Naive thymus-derived CD4-positive, alpha-beta T cell (primary cell): ENCODE measurements at regions of chr7 and their contacts with region 1.

Region 1: DNA sequence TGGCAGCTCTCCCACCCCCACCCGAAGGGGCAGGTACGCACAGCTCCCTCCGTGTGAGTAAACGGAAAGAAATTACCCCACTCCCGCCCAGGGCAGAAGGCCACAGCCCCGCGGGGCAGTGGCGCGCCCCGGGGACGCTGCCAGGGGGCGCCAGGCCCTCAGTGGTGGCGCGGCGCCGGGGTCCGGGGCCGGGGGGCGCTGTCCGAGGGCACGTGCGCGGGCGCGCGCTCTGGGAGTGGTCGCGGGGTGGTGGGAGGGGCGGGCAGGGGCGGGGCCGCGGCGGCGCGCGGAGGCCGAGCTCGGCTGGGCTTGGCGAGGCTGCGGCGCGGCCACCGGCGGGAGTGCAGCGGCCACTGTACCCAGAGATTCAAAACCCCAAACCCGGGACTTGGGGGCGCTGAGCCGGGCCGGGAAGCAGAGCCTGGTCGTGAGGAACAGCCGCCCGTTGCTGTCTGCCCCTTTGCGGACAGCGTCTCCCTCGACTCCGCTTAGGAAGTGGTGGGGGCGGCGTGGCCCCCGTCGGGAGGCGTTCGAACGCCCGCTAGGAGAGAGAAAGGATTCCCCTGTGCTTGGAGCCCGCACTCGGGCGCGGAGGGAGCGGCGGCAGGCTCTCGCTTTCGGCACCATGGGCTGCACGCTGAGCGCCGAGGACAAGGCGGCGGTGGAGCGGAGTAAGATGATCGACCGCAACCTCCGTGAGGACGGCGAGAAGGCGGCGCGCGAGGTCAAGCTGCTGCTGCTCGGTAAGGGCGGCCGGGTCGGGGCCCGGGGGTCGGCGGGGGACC is at the start of gene GNAI1:
- DNase-seq: peak in 8 of 9 donors; percentile 12 to 44 (median 28)
- ATAC-seq: peak; percentile 58
- H3K4me3 ChIP-seq: peak within 1 kb of the TSS; percentile 30
- H3K4me3 Mint-ChIP-seq: peak within 1 kb of the TSS; percentile 74 to 94 (median 87)
- H3K27ac ChIP-seq: peak within 1 kb of the TSS; percentile 58
- H3K27ac Mint-ChIP-seq: peak within 1 kb of the TSS in 8 of 9 donors; percentile 34 to 90 (median 83)
- H3K4me1 ChIP-seq: peaks cover 0 to 6% of the 10 kb centered on the region in 2 donors
- H3K4me1 Mint-ChIP-seq: peaks cover 12 to 45% (median 37%) of the 10 kb centered on the region in 7 donors
- H3K27me3 ChIP-seq: no peaks in the 10 kb centered on the region
- H3K27me3 Mint-ChIP-seq: peaks cover 25 to 63% (median 30%) of the 10 kb centered on the region in 5 donors
- total RNA-seq, gene GNAI1: 0.60 to 3.4 (median 2.4) TPM

Region 2: DNA sequence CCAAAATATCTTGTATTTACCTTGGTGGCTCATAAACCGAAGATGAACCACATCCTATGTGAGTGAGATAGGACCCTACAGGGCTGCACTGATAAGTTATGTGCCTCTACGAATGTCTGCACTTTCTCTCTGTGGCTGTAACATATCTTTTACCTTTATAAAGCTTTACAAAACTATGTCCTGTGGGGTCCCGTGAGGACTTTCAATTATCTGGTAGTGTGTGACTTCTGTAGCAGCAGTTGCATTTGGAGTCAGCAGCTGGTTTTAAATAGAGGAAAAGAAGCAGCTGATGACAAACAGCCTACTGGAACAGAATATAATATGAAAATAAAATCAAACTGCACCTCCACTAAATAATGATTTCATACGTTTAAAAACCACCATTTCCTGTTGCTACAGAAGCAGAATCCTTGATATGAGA is 222.5 kb before region 1 on chr7:
- CTCF ChIA-PET with region 1: no interaction called
- POLR2A ChIA-PET with region 1: no interaction called
- intact Hi-C with region 1: loop called in 1 of 2 experiments (anchors 10 kb)
- DNase-seq: peak in 6 of 9 donors; percentile 19 to 42 (median 28)
- ATAC-seq: no peak
- H3K4me3 ChIP-seq: peak overlapping the region; percentile 10
- H3K4me3 Mint-ChIP-seq: peak overlapping the region in 9 of 10 donors; percentile 51 to 77 (median 69)
- H3K27ac ChIP-seq: peak overlapping the region; percentile 38
- H3K27ac Mint-ChIP-seq: peak overlapping the region; percentile 32 to 88 (median 67)
- H3K4me1 ChIP-seq: peaks cover 0 to 29% of the 10 kb centered on the region in 2 donors
- H3K4me1 Mint-ChIP-seq: peaks cover 3 to 73% (median 64%) of the 10 kb centered on the region in 7 donors
- H3K27me3 ChIP-seq: no peaks in the 10 kb centered on the region
- H3K27me3 Mint-ChIP-seq: no peaks in the 10 kb centered on the region

Region 3: GRCh38 chr7:79949778-79950177 is 184.9 kb before region 1 on chr7:
- CTCF ChIA-PET with region 1: no interaction called
- POLR2A ChIA-PET with region 1: no interaction called
- intact Hi-C with region 1: no loop called
- DNase-seq: no peak
- ATAC-seq: no peak
- H3K4me3 ChIP-seq: no peak overlapping the region
- H3K4me3 Mint-ChIP-seq: no peak overlapping the region
- H3K27ac ChIP-seq: no peak overlapping the region
- H3K27ac Mint-ChIP-seq: no peak overlapping the region
- H3K4me1 ChIP-seq: no peaks in the 10 kb centered on the region
- H3K4me1 Mint-ChIP-seq: no peaks in the 10 kb centered on the region
- H3K27me3 ChIP-seq: no peaks in the 10 kb centered on the region
- H3K27me3 Mint-ChIP-seq: no peaks in the 10 kb centered on the region

Region 4: DNA sequence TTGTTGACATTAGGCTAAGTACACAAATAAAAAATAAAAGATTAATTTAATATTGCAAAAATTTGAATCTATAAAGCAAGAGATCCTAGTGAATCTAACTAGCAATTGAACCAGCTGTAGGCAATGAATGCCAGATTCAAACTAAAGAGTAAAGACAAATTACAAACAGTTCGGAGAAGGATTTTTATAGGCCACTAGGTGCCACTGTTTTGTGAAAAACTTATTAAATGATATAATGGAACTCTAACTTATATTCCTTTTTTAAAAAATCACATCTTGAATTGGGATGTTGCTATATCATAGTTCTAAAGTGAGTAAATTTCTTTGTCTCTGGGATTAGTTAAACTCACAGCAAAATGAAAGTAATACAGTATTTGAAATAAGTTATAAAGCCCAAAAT is 39.2 kb before region 1 on chr7:
- CTCF ChIA-PET with region 1: interaction called, 3 read pairs
- POLR2A ChIA-PET with region 1: no interaction called
- intact Hi-C with region 1: loop called (anchors 2 to 5 kb)
- DNase-seq: peak in 3 of 9 donors; percentile 13 to 17 (median 17)
- ATAC-seq: no peak
- H3K4me3 ChIP-seq: no peak overlapping the region
- H3K4me3 Mint-ChIP-seq: no peak overlapping the region
- H3K27ac ChIP-seq: no peak overlapping the region
- H3K27ac Mint-ChIP-seq: no peak overlapping the region
- H3K4me1 ChIP-seq: no peaks in the 10 kb centered on the region
- H3K4me1 Mint-ChIP-seq: no peaks in the 10 kb centered on the region
- H3K27me3 ChIP-seq: no peaks in the 10 kb centered on the region
- H3K27me3 Mint-ChIP-seq: no peaks in the 10 kb centered on the region

Region 5: DNA sequence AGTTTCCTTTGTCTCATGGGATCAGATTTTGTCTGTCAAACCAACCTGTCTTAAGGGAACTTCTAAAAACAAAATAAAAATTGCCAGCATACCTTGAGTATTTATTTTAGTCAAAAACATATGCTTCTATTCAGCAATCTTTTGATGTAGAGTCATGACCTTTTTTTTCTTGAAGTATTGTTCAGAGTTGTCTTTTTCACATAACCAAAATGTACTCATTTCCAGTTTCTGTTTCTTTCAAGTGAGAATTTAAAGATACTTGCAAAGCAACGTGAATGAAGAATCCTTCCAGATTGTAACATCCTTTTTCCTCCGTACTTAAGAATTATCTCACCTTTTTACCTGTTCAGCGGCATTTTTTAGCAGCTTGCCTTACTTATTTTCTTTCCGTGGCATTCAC is 37.7 kb after region 1 on chr7:
- CTCF ChIA-PET with region 1: no interaction called
- POLR2A ChIA-PET with region 1: no interaction called
- intact Hi-C with region 1: loop called in 1 of 2 experiments (anchors 2 kb)
- DNase-seq: peak in 6 of 9 donors; percentile 33 to 56 (median 49)
- ATAC-seq: peak; percentile 37
- H3K4me3 ChIP-seq: no peak overlapping the region
- H3K4me3 Mint-ChIP-seq: peak overlapping the region in 9 of 10 donors; percentile 5 to 85 (median 75)
- H3K27ac ChIP-seq: no peak overlapping the region
- H3K27ac Mint-ChIP-seq: peak overlapping the region in 7 of 9 donors; percentile 64 to 91 (median 83)
- H3K4me1 ChIP-seq: no peaks in the 10 kb centered on the region
- H3K4me1 Mint-ChIP-seq: peaks cover 0 to 34% (median 15%) of the 10 kb centered on the region in 7 donors
- H3K27me3 ChIP-seq: no peaks in the 10 kb centered on the region
- H3K27me3 Mint-ChIP-seq: no peaks in the 10 kb centered on the region

Region 6: DNA sequence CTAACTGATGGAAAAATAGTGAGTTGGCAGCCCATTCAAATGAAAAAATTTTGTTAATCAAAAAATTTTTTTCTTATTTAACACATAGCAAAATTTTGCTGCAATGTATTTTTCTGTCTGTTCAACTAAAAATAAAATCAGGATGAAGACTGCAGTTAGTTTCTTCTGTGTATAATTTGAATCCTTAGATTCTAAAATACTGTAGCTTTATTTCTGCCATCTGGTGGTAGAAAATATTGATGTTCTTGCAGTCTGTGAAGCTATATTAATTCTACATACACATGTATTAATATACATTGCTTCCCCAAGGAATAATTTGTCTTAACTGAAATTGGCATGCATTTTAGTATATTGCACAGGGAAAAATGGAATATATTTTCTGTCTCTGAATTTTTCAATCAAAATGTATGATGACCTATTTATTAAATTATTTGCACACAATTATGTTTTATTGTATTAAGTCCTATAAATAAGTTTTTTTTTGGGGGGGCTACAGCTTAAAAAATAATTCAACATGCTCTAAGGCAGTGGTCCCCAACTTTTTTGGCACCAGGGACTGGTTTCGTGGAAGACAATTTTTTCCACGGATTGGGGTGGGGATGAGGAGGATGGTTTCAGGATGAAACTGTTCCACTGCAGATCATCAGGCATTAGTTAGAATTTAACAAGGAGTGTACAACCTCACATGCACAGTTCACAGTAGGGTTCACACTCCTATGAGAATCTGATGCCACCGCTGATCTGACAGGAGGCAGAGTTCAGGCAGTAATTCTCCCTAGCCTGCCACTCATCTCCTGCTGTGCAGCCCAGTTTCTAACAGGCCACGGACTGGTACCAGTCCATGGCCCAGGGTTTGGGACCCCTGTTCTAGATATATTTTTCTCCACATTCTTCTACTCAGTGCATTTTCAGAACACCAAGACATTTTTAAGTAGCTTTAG is 257.8 kb after region 1 on chr7:
- CTCF ChIA-PET with region 1: interaction called, 3 read pairs
- POLR2A ChIA-PET with region 1: no interaction called
- intact Hi-C with region 1: loop called in 1 of 2 experiments (anchors 1 kb)
- DNase-seq: peak in 5 of 9 donors; percentile 13 to 38 (median 21)
- ATAC-seq: no peak
- H3K4me3 ChIP-seq: no peak overlapping the region
- H3K4me3 Mint-ChIP-seq: no peak overlapping the region
- H3K27ac ChIP-seq: no peak overlapping the region
- H3K27ac Mint-ChIP-seq: peak overlapping the region in 1 of 9 donors; percentile 23
- H3K4me1 ChIP-seq: no peaks in the 10 kb centered on the region
- H3K4me1 Mint-ChIP-seq: no peaks in the 10 kb centered on the region
- H3K27me3 ChIP-seq: no peaks in the 10 kb centered on the region
- H3K27me3 Mint-ChIP-seq: no peaks in the 10 kb centered on the region

Region 7: GRCh38 chr7:80481200-80481884 is 346.6 kb after region 1 on chr7:
- CTCF ChIA-PET with region 1: no interaction called
- POLR2A ChIA-PET with region 1: no interaction called
- intact Hi-C with region 1: no loop called
- DNase-seq: no peak
- ATAC-seq: no peak
- H3K4me3 ChIP-seq: no peak overlapping the region
- H3K4me3 Mint-ChIP-seq: no peak overlapping the region
- H3K27ac ChIP-seq: no peak overlapping the region
- H3K27ac Mint-ChIP-seq: no peak overlapping the region
- H3K4me1 ChIP-seq: no peaks in the 10 kb centered on the region
- H3K4me1 Mint-ChIP-seq: no peaks in the 10 kb centered on the region
- H3K27me3 ChIP-seq: no peaks in the 10 kb centered on the region
- H3K27me3 Mint-ChIP-seq: no peaks in the 10 kb centered on the region